OCI-LY7 (cell line): ENCODE measurements at regions of chr17 and their contacts with region 1.

Region 1: DNA sequence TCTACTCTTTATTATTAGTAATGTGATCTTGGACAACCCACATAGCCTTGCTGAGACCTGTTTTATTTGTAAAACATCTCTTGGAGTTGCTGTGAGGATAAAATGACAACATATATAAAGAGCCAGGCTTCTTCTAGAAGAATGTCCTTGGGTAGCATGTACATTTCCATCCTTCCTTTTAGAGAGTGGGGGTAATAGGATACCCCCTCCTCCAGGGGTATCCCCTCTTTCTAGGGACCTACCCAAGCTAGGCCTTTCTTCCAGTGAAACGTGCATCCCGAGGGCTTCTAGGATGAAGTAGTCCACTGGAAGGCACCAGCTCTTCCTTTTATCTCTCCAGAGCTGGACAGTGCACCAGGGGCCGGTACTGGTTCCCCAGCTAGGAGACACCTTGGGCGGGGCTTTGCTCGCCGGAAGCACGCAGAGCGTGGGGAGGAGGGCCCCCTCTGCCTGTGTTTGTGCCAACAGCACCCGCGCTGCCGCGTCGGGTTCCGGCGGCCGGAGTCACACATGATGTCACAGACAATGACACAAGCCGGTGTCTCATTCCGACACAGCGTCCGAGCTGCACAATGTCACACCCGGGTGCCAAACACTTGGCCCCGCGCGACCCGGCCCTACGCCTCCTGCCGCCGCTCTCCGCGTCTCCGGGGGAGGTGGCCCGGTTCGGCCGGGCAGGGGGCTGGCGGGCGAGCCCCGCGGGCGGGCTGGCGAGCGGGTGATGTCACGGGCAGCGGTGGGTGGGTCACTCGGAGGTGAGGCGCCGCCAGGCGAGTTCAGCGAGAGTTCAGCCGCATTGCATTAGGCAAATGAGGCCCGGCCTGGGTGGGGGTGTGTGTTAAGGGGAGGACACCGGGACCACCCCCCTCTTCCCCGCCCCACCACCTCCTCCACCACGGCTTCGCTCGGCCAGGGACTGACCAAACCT is 23.4 kb downstream of the GJD3 start:
- DNase-seq: peak; percentile 90
- H3K4me3 ChIP-seq: peak overlapping the region; percentile 73
- H3K27ac ChIP-seq: peak overlapping the region; percentile 2
- H3K4me1 ChIP-seq: peaks cover 50% of the 10 kb centered on the region
- CTCF ChIP-seq: peak; percentile 41; the same call in 1 of the 2 replicates

Region 2: GRCh38 chr17:40322356-40323315 is 18.5 kb before region 1 on chr17:
- CTCF ChIA-PET with region 1: interaction called, 4 read pairs
- POLR2A ChIA-PET with region 1: interaction called, 13 read pairs
- intact Hi-C with region 1: loop called (anchors 1 kb)
- DNase-seq: peak; percentile 90
- H3K4me3 ChIP-seq: peak overlapping the region; percentile 56
- H3K27ac ChIP-seq: peak overlapping the region; percentile 32
- H3K4me1 ChIP-seq: peaks cover 82% of the 10 kb centered on the region
- CTCF ChIP-seq: no peak

Region 3: DNA sequence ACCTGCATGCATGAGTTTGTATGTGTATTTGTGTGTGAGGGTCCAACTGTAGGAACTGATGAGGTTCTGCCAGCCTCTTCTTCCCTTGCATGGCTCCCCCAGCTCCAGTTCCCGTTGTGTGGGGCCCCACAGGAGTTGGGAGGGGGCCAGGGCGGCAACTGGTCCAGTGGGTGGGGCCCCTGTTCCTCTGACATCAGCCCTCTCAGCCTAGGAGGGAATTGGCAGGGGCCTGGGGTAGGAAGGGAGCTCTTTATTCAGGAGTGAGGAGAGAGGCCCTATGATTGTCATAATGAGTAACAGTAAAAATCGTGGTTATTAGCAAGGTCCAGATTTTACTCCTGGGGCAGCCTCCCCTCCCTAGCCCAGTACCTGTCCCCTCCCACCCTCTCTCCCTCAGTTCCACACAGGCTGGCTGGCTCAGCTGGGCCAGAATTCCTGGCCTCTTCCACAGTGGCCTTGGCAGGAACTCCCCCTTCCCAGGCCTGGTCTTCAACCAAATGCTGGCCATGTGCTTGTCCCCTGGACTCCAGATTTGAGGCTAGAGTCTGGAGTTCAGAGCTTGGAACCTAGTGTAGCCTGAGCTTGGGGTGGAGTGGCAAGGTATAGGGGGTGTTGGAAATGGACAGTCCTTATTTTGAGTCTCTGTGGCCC is 13.3 kb before region 1 on chr17:
- CTCF ChIA-PET with region 1: interaction called, 3 read pairs
- POLR2A ChIA-PET with region 1: interaction called, 13 read pairs
- intact Hi-C with region 1: no loop called
- DNase-seq: no peak
- H3K4me3 ChIP-seq: no peak overlapping the region
- H3K27ac ChIP-seq: no peak overlapping the region
- H3K4me1 ChIP-seq: peaks cover 58% of the 10 kb centered on the region
- CTCF ChIP-seq: no peak